ENCODE measurements at regions of chr13 and their contacts with region 1.

Region 1: GRCh38 chr13:51452361-51453206 is at the start of gene INTS6:
- DNase-seq: peak; percentile 99
- H3K4me3 Mint-ChIP-seq: peak within 1 kb of the TSS; percentile 94
- H3K27ac Mint-ChIP-seq: peak within 1 kb of the TSS; percentile 99
- H3K4me1 Mint-ChIP-seq: peaks cover 35% of the 10 kb centered on the region
- H3K27me3 Mint-ChIP-seq: no peaks in the 10 kb centered on the region
- total RNA-seq, gene INTS6: 40.4 to 41.0 TPM

Region 2: GRCh38 chr13:49495783-49496762 is 1956.5 kb before region 1 on chr13 and contains the start of gene PHF11:
- CTCF ChIA-PET with region 1: no interaction called
- intact Hi-C with region 1: loop called (anchors 2 kb)
- DNase-seq: peak; percentile 95
- H3K4me3 Mint-ChIP-seq: peak within 1 kb of the TSS; percentile 91
- H3K27ac Mint-ChIP-seq: peak within 1 kb of the TSS; percentile 96
- H3K4me1 Mint-ChIP-seq: peaks cover 49% of the 10 kb centered on the region
- H3K27me3 Mint-ChIP-seq: no peaks in the 10 kb centered on the region
- total RNA-seq, gene PHF11: 91.4 to 96.9 TPM

Region 3: DNA sequence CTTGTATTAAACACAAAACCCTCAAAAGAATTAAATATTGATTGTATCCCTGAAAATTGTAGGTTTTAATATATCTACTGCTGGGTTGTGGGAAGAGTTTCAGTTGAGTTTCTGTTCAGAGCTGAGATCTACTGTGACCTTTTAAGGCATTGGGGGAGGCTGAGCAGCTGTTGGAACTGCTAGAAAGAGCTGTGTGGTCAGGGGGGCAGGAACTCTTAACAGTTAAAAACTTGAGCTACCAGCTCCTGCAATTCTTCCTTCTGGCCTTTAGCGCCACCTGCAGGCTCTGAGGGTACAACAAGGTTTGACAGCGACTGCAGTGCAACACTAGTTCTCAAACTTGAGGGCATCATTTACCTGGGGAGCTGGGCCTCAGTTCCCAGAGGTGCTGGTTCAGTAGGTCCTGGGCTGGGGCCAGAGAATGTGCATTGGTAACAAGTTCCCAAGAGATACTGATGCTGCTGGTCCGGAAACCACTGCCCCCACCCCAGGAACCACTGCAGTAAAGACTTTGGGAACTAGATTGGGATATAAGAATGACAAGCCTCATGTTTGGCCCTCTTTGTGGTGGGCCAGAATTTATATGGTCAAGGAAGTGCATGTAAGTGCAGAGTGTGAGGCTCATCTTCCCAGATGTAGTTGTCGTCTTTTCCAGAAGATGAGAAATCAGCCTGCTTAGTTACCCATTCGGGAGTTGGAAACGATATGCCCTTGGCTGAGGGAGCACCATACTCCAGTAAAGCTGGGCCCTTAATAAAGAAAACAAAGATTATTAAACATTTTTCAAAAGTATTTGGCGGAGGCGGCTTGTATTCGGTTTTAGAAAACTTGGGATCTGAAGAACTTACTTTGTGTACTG is 540.4 kb before region 1 on chr13:
- CTCF ChIA-PET with region 1: no interaction called
- intact Hi-C with region 1: loop called (anchors 1 kb)
- DNase-seq: peak; percentile 97
- H3K4me3 Mint-ChIP-seq: peak overlapping the region; percentile 94
- H3K27ac Mint-ChIP-seq: peak overlapping the region; percentile 75
- H3K4me1 Mint-ChIP-seq: peaks cover 46% of the 10 kb centered on the region
- H3K27me3 Mint-ChIP-seq: no peaks in the 10 kb centered on the region

Region 4: GRCh38 chr13:51465124-51465523 is 12.5 kb after region 1 on chr13:
- CTCF ChIA-PET with region 1: no interaction called
- intact Hi-C with region 1: no loop called
- DNase-seq: no peak
- H3K4me3 Mint-ChIP-seq: no peak overlapping the region
- H3K27ac Mint-ChIP-seq: no peak overlapping the region
- H3K4me1 Mint-ChIP-seq: no peaks in the 10 kb centered on the region
- H3K27me3 Mint-ChIP-seq: no peaks in the 10 kb centered on the region

Region 5: DNA sequence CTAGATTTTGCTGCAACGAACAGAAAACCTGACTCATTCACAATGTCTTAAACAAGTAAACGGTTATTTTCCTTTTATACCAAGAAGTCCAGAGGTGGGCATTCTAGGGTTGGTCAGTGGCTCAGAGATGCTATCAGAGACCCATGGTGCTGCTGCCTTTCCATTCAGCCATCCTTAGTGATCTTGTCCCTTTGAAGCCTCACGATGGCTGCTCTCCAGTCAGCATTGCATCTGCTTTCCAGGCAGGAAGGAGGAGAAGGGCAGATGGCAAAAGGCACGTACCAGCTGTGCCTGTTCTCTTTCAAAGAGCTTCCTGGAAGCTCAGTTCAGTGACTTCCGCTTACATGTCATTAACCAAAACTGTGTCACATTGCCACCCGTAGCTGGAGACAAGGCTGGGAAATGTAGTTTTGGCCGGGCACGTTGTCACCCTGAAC is 161.8 kb after region 1 on chr13:
- CTCF ChIA-PET with region 1: no interaction called
- intact Hi-C with region 1: loop called (anchors 1 kb)
- DNase-seq: peak; percentile 78
- H3K4me3 Mint-ChIP-seq: peak overlapping the region; percentile 74
- H3K27ac Mint-ChIP-seq: peak overlapping the region; percentile 96
- H3K4me1 Mint-ChIP-seq: peaks cover 18% of the 10 kb centered on the region
- H3K27me3 Mint-ChIP-seq: no peaks in the 10 kb centered on the region

Region 6: GRCh38 chr13:51764184-51765141 is 311.9 kb after region 1 on chr13:
- CTCF ChIA-PET with region 1: interaction called, 5 read pairs
- intact Hi-C with region 1: loop called (anchors 1 kb)
- DNase-seq: peak; percentile 84
- H3K4me3 Mint-ChIP-seq: peak overlapping the region; percentile 73
- H3K27ac Mint-ChIP-seq: peak overlapping the region; percentile 82
- H3K4me1 Mint-ChIP-seq: peaks cover 35% of the 10 kb centered on the region
- H3K27me3 Mint-ChIP-seq: no peaks in the 10 kb centered on the region

Region 7: DNA sequence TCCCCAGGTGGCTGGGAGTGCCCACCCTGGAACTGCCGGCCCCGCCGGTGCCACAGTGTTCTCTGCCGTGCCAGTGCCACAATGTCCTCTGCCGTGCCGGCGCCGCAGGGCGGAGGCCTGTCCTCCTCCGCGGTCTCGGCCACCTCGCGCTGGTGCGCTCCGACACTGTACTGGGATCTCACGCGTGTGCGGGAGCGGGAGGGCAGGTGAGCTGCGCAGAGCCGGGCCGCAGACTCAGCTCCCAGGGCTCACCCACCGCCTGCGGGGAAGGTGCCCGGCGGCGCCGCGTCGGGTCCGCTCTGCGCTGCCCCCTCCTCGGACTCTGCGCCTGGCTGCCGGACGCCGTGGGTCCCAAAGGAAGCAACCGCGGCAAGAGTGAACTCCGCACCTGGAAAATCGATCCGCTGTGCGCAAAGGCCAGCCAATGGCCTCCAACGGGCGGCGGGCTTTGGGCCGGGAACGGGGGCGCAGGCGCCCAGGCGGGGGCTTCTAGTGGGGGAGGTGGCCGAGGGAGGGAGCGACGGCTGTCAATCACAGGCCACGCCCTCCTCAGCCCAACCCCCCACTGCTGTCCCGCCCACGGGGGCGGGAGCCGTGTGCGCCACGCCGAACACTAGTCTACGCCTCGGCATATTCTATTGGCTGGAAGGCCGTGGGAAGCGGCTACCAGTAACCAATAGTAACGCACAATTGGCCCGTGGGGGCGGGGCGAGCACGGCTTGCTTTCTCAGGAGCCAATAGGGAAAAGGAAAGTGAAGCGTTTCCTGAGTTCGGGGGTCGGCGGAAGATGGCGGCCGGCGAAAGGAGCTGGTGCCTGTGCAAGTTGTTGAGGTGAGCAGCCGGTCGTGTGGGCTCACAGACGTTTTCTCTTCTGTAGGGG is 559.3 kb after region 1 on chr13 and contains the start of gene ALG11:
- CTCF ChIA-PET with region 1: no interaction called
- intact Hi-C with region 1: loop called (anchors 2 kb)
- DNase-seq: peak; percentile 100
- H3K4me3 Mint-ChIP-seq: peak within 1 kb of the TSS; percentile 98
- H3K27ac Mint-ChIP-seq: peak within 1 kb of the TSS; percentile 85
- H3K4me1 Mint-ChIP-seq: peaks cover 14% of the 10 kb centered on the region
- H3K27me3 Mint-ChIP-seq: peaks cover 10% of the 10 kb centered on the region
- total RNA-seq, gene ALG11: 12.6 to 15.6 TPM

Region 8: DNA sequence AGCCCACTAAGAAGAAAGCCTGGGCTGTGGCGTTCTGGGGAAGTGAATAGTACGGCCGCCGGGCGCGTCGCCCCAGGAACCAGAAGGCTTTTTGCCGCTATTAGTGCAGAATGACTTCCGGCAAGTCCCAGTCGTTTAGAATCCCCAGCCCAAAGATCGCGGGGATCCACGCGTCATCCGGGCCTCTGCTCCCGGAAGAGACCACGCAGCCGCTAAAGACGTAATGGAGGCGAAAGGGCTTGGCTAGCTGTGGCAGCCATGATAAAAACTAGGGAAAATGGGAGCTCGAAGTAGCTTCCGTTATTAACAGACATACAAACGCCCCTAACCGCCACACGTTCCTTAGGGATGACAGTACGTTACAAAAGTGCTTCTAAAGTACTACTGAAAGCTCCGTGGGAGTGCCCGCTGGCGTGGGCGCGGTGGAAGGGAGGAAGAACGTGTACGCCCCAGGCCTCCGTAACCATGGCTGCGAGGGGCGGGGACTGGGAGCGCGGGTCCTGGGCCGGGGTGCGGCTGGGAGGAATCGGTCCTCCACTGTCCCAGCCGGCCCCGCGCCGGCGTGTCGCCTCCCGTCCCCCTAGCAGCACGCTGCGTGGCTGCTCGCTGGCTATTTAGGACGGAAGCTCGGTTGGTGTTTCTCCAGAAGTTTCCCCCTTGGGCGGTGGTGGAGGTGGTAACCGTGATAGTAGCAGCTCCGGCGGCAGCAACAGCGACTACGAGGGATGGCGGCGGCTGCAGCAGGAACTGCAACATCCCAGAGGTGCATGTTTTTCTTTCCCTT is 1199.8 kb after region 1 on chr13 and contains the start of gene SUGT1:
- CTCF ChIA-PET with region 1: no interaction called
- intact Hi-C with region 1: loop called (anchors 1 kb)
- DNase-seq: peak; percentile 95
- H3K4me3 Mint-ChIP-seq: no peak within 1 kb of the TSS
- H3K27ac Mint-ChIP-seq: no peak within 1 kb of the TSS
- H3K4me1 Mint-ChIP-seq: peaks cover 14% of the 10 kb centered on the region
- H3K27me3 Mint-ChIP-seq: no peaks in the 10 kb centered on the region
- total RNA-seq, gene SUGT1: 42.7 to 44.1 TPM